Activated CD4-positive, alpha-beta T cell treated with anti-CD3 and anti-CD28 coated beads, Interleukin-2, amount 10 ng/mL, durations not matched to agents 7 days and 5 days (primary cell): ENCODE measurements at regions of chrX and their contacts with region 1.

Region 1: DNA sequence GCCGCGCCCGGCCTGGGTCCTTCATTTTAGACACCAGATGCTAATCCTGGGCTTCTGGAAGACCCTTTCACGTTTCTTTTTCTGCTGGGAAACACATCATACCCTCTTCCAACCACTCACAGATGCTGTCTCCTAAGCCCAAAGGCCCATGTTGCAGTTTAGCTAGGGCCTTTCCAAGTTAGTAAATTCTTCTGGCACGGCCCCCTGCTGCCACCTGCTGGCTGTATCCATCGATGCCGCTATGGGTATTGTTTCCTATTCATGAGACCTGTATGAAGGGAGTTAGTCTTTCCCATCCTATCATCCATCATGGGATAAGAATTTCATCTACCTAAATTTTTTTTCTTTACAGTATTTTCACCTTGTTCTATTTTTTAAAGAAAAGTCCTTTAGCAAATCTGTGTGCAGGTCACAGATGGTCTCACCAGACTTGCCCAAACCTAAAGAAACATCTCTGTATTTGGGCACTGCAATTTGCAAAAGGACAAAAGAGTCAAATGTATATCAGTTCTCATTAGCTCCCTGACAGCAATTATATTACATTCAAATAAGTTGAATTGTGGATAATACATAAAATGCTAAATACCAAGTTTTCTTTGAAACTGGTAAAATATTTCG is 37.8 kb upstream of the SLC9A7 start:
- DNase-seq: peak; percentile 72
- H3K4me3 Mint-ChIP-seq: no peak overlapping the region
- H3K27ac Mint-ChIP-seq: no peak overlapping the region
- H3K4me1 Mint-ChIP-seq: peaks cover 19% of the 10 kb centered on the region
- H3K27me3 Mint-ChIP-seq: peaks cover 3% of the 10 kb centered on the region

Region 2: DNA sequence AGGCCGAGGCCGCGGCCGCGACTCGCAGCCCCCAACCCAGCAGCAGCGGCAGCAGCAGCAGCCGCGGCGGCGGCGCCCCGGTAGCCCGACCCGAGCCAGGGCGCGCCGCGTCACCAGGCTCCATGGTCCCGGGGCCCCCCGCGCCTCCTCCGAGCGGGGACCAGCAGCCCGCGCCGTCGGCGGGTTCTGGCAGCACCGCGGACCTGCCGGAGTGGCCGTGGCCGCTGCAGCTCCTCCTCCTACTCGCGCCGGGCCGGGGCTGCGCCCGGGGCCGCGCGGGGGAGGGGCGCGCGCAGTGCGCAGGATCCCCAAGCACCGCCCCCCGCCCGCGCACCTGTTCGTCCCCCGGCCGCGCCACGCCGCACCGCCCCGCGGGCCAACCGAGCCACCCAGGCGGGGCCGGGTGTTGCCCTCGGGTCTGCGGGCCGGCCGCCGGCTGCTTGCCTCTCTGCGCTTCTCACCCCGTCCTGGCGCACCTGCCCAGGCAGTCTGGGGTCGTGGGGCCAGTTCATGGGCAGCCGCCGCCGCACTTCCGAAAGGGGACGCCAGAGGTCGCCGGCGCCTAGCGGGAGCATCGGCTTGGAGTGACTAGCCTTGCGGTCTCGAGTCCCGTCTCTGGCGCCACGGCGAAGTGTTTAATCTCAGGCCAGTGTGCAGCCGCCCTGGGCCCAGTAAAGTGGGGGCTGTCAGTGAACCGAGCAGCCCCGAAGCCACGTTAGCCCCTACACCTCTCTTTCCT is 37.6 kb before region 1 on chrX and contains the start of gene SLC9A7:
- CTCF ChIA-PET with region 1: interaction called, 15 read pairs
- POLR2A ChIA-PET with region 1: no interaction called
- DNase-seq: peak; percentile 73
- H3K4me3 Mint-ChIP-seq: peak within 1 kb of the TSS; percentile 90
- H3K27ac Mint-ChIP-seq: peak within 1 kb of the TSS; percentile 94
- H3K4me1 Mint-ChIP-seq: peaks cover 26% of the 10 kb centered on the region
- H3K27me3 Mint-ChIP-seq: peaks cover 4% of the 10 kb centered on the region
- total RNA-seq, gene SLC9A7: 5.3 to 7.4 TPM